Caco-2 (cell line): ENCODE measurements at regions of chr7 and their contacts with region 1.

Region 1: GRCh38 chr7:25125137-25125946 is at the start of gene CYCS:
- DNase-seq: peak; percentile 99 to 100
- H3K4me3 ChIP-seq: peak within 1 kb of the TSS; percentile 77
- H3K4me3 Mint-ChIP-seq: peak within 1 kb of the TSS; percentile 88
- H3K27ac Mint-ChIP-seq: peak within 1 kb of the TSS; percentile 96
- H3K4me1 ChIP-seq: peaks cover 16% of the 10 kb centered on the region; the same call in 1 of the 2 replicates
- H3K4me1 Mint-ChIP-seq: peaks cover 19% of the 10 kb centered on the region
- H3K27me3 ChIP-seq: no peaks in the 10 kb centered on the region
- H3K27me3 Mint-ChIP-seq: no peaks in the 10 kb centered on the region
- CTCF ChIP-seq: peak in 1 of 2 experiments; percentile 2
- total RNA-seq, gene CYCS: 156 and 177 TPM in 2 replicates

Region 2: DNA sequence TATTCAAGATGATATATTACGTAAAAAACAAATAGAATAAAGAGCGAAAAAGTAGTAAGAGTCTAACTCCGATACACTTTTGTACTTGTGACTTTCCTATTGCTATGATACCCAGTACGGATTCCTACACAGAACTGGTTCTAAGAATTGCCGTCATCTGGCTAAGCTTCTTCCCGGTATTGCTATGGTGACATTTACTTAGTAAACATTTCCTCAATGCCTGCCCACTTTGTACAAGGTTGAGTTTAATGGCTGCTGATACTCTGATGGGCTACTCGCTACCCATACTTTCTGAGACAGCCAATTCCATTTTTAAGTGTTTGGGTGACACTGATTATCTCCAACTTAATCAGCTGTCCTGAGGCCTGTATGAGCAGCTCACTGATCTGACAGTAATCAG is 201.0 kb before region 1 on chr7:
- CTCF ChIA-PET with region 1: no interaction called
- POLR2A ChIA-PET with region 1: interaction called, 11 read pairs
- intact Hi-C with region 1: no loop called
- DNase-seq: no peak
- H3K4me3 ChIP-seq: no peak overlapping the region
- H3K4me3 Mint-ChIP-seq: no peak overlapping the region
- H3K27ac Mint-ChIP-seq: no peak overlapping the region
- H3K4me1 ChIP-seq: peaks cover 10% of the 10 kb centered on the region; the same call in 1 of the 2 replicates
- H3K4me1 Mint-ChIP-seq: peaks cover 7% of the 10 kb centered on the region
- H3K27me3 ChIP-seq: no peaks in the 10 kb centered on the region
- H3K27me3 Mint-ChIP-seq: no peaks in the 10 kb centered on the region
- CTCF ChIP-seq: no peak

Region 3: GRCh38 chr7:25143763-25144162 is 18.4 kb after region 1 on chr7:
- CTCF ChIA-PET with region 1: interaction called, 3 read pairs
- POLR2A ChIA-PET with region 1: interaction called, 4 read pairs
- intact Hi-C with region 1: loop called (anchors 1 kb)
- DNase-seq: no peak
- H3K4me3 ChIP-seq: no peak overlapping the region
- H3K4me3 Mint-ChIP-seq: no peak overlapping the region
- H3K27ac Mint-ChIP-seq: no peak overlapping the region
- H3K4me1 ChIP-seq: peaks cover 19% of the 10 kb centered on the region
- H3K4me1 Mint-ChIP-seq: peaks cover 16% of the 10 kb centered on the region
- H3K27me3 ChIP-seq: no peaks in the 10 kb centered on the region
- H3K27me3 Mint-ChIP-seq: no peaks in the 10 kb centered on the region
- CTCF ChIP-seq: no peak

Region 4: DNA sequence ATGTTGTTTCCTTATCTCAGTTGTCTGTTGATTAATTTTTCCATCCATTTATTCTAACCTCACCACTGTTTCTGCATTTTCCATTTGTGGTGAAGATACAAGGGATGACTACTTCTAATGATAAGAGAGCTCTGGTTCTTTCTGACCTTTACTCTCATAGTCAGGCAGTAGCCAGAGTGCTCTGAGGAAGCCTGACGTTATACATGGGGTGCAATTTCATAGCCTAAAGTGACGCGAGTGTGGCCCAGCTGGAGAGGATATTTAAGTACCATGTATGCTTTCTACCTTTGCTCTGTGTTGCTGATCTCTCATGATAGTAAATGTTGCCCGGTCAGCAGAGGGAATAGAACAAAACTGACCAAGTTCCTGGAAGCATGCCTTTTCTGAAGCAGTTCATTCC is 33.6 kb after region 1 on chr7:
- CTCF ChIA-PET with region 1: interaction called, 5 read pairs
- POLR2A ChIA-PET with region 1: no interaction called
- intact Hi-C with region 1: loop called (anchors 1 kb)
- DNase-seq: no peak
- H3K4me3 ChIP-seq: no peak overlapping the region
- H3K4me3 Mint-ChIP-seq: no peak overlapping the region
- H3K27ac Mint-ChIP-seq: no peak overlapping the region
- H3K4me1 ChIP-seq: no peaks in the 10 kb centered on the region
- H3K4me1 Mint-ChIP-seq: no peaks in the 10 kb centered on the region
- H3K27me3 ChIP-seq: no peaks in the 10 kb centered on the region
- H3K27me3 Mint-ChIP-seq: no peaks in the 10 kb centered on the region
- CTCF ChIP-seq: no peak